K562 (cell line): ENCODE measurements at regions of chr1 and their contacts with region 1.

Region 1: DNA sequence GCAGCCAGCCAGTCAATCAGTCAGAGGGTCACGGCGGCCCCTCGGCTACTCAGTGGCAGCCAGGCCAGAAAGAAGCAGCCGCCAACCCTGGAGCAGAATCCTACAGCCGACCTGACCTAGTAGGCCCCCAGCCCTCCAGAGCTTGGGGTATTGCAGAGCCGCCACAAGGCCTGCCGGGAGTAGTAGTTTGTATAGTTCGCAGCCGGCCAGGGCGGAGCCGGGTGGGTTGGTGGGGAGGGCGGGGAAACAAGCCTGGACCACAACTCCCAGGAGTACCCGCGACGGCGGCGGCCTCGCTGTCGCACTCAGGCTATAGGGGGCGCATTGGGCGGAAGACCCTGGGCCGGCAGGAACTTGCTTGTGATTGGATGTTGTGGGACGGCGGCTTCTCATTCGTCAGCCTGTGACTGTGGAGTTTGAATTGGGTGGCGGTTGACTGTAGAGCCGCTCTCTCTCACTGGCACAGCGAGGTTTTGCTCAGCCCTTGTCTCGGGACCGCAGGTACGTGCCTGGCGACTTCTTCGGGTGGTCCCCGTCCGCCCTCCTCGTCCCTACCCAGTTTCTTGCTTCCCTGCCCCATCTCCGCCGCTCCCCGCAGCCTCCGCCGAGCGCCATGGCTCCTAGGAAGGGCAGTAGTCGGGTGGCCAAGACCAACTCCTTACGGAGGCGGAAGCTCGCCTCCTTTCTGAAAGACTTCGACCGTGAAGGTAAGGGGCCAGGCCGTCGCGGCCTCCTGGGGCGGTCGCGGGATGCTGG is at the start of gene CDCA8:
- DNase-seq: peak; percentile 97 to 100 (median 98)
- ATAC-seq: peak; percentile 92
- H3K4me3 ChIP-seq: peak within 1 kb of the TSS; percentile 92
- H3K27ac ChIP-seq: peak within 1 kb of the TSS; percentile 90
- H3K4me1 ChIP-seq: peaks cover 19 to 32% of the 10 kb centered on the region in 2 experiments
- H3K27me3 ChIP-seq: no peaks in the 10 kb centered on the region
- CTCF ChIP-seq: peak; percentile 76 to 85 (median 84)
- EP300 ChIP-seq: no peak; the same call in 1 of the 2 replicates
- POLR2A ChIP-seq: peak; percentile 98
- RAD21 ChIP-seq: no peak
- polyA plus RNA-seq, gene CDCA8: 84.3 to 148 TPM

Region 2: GRCh38 chr1:37553927-37554808 is 138.1 kb before region 1 on chr1 and contains the start of gene SNIP1:
- CTCF ChIA-PET with region 1: no interaction called
- POLR2A ChIA-PET with region 1: no interaction called
- in situ Hi-C with region 1: no loop called
- intact Hi-C with region 1: loop called (anchors 5 kb)
- DNase-seq: peak; percentile 95 to 98 (median 96)
- ATAC-seq: peak; percentile 95
- H3K4me3 ChIP-seq: peak within 1 kb of the TSS; percentile 82
- H3K27ac ChIP-seq: peak within 1 kb of the TSS; percentile 86
- H3K4me1 ChIP-seq: peaks cover 21 to 24% of the 10 kb centered on the region in 2 experiments
- H3K27me3 ChIP-seq: no peaks in the 10 kb centered on the region
- CTCF ChIP-seq: no peak
- EP300 ChIP-seq: 0 out of 2 replicates have a peak, but pooled peaks have one; percentile 24
- POLR2A ChIP-seq: peak; percentile 94
- RAD21 ChIP-seq: no peak
- polyA plus RNA-seq, gene SNIP1: 2.9 TPM

Region 3: GRCh38 chr1:37807555-37808368 is 115.5 kb after region 1 on chr1 and contains the starts of genes C1orf122 and YRDC:
- CTCF ChIA-PET with region 1: no interaction called
- POLR2A ChIA-PET with region 1: interaction called, 3 read pairs
- in situ Hi-C with region 1: no loop called
- intact Hi-C with region 1: loop called (anchors 2 kb)
- DNase-seq: peak; percentile 96 to 98 (median 96)
- ATAC-seq: peak; percentile 94
- H3K4me3 ChIP-seq: peak within 1 kb of the TSS; percentile 93
- H3K27ac ChIP-seq: peak within 1 kb of the TSS; percentile 78
- H3K4me1 ChIP-seq: peaks cover 18 to 25% of the 10 kb centered on the region in 2 experiments; a peak in 4 of 5 replicates
- H3K27me3 ChIP-seq: no peaks in the 10 kb centered on the region
- CTCF ChIP-seq: no peak
- EP300 ChIP-seq: no peak
- POLR2A ChIP-seq: peak; percentile 82
- RAD21 ChIP-seq: no peak
- polyA plus RNA-seq, gene C1orf122: 3.6 to 5.2 TPM
- polyA plus RNA-seq, gene YRDC: 11.1 to 16.7 TPM

Region 4: DNA sequence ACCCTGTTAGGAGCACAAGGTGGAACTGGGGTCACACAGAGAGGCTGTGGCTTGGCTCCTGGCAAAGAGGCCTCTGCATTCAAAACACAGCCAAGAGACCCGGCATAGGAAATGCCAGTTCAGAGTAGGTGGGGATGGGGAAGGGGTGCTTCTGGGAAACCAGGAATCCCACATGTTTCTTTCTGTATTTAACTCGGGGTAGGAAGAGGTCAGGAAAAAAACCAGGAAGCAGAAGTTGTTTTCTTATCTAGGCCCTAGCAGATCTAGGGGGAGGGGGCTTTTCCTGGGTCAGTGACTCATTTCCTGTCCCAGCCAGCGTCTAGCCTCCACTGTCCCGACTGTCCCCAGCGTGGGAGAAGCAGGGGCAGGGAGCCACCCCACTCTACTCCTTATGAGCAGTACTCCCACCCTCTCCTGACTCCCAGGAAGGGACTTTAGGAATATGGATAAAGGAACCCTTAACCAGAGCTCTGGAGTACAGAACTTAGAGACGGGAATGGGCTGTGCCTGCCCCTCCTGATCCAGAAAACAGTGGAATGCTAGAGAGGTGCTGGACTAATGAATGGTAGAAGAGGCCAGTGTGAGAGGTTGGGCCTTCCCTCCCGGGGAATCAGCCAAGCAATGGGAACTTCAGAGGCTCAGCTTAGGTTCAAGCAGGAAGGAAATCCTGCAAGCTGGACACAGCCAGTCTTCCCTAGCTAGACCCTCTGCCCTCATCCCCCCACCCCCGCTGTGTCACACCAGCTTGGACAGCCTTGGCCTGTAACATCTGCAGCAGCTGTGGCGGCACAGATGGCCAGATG is 307.4 kb after region 1 on chr1:
- CTCF ChIA-PET with region 1: no interaction called
- POLR2A ChIA-PET with region 1: interaction called, 4 read pairs
- in situ Hi-C with region 1: no loop called
- intact Hi-C with region 1: loop called (anchors 5 kb)
- DNase-seq: peak; percentile 84 to 96 (median 89)
- ATAC-seq: peak; percentile 74
- H3K4me3 ChIP-seq: peak overlapping the region; percentile 65
- H3K27ac ChIP-seq: peak overlapping the region; percentile 96
- H3K4me1 ChIP-seq: peaks cover 51 to 73% of the 10 kb centered on the region in 2 experiments
- H3K27me3 ChIP-seq: no peaks in the 10 kb centered on the region
- CTCF ChIP-seq: no peak
- EP300 ChIP-seq: peak; percentile 98
- POLR2A ChIP-seq: peak; percentile 81
- RAD21 ChIP-seq: 0 out of 4 replicates have a peak, but pooled peaks of 1 of the 2 experiments have one; percentile 2